Heart left ventricle (tissue), 16 donors: ENCODE measurements at regions of chr6 and their contacts with region 1.

Region 1: DNA sequence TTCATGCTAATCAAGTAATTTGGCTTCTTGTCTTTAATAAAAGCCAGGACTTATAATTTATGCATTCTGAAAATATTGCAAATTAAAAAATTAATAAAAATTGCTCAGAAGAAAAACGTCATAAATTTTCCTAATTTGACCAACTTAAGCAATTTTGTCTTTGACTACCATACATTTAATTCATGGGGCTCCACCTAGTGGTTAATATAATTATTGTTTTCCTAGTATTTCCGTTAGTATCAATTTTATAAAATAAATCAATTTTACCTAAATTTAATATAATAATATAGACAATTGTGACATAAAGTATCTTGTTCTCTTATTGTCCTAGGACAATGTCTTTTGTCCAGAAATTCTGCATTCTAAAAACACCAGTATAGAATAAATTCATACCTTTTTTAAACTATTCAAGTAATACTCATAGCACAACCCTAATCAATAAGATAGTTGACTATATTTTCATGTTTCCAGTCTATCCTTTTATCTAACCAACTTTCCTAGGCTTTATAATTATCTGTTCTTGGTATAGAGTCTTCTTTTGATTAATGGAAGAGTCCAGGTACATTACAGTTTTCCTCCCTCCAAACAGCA is 319.9 kb downstream of the TRDN start:
- DNase-seq: no peak
- ATAC-seq: no peak
- H3K4me3 ChIP-seq: no peak overlapping the region
- H3K27ac ChIP-seq: no peak overlapping the region
- H3K4me1 ChIP-seq: no peaks in the 10 kb centered on the region
- H3K27me3 ChIP-seq: no peaks in the 10 kb centered on the region
- CTCF ChIP-seq: peak; percentile 41 to 78 (median 62)
- POLR2A ChIP-seq: no peak

Region 2: GRCh38 chr6:122730775-122731386 is 585.9 kb before region 1 on chr6:
- intact Hi-C with region 1: loop called in 8 of 10 experiments (anchors 5 to 10 kb)
- DNase-seq: no peak
- ATAC-seq: no peak
- H3K4me3 ChIP-seq: no peak overlapping the region
- H3K27ac ChIP-seq: no peak overlapping the region
- H3K4me1 ChIP-seq: no peaks in the 10 kb centered on the region
- H3K27me3 ChIP-seq: peaks cover 0 to 18% (median 0%) of the 10 kb centered on the region in 9 donors
- CTCF ChIP-seq: peak; percentile 58 to 89 (median 75)
- POLR2A ChIP-seq: no peak

Region 3: DNA sequence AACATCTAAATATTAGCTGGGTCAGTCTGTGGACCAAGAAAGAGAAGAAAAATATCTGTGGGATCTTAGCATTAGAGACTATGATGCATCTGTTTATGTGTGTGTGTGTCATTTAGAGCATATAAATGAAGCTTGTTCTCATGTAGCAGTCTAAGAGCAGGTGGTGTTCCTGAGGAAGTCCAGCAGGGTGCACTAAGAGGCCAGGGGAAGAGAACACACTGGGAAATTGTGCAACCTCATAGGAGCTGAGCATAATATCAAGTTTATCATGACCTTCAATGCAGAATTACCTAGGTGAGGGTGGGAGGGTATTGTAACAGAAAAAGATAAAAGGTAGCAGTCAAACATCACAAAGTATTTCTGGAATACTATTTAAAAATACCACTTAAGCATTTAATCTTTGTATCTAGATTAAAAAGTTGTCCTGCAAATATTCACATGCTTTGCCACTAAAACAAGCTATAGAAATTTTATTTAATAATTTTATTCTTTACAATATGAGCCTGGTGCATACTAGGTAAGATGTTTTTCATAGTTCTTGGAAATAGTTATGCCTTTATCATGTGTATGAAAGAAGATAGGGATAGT is 447.3 kb before region 1 on chr6:
- intact Hi-C with region 1: loop called (anchors 2 to 10 kb)
- DNase-seq: peak in 1 of 5 donors; percentile 24
- ATAC-seq: peak; percentile 61 to 84 (median 80)
- H3K4me3 ChIP-seq: no peak overlapping the region
- H3K27ac ChIP-seq: no peak overlapping the region
- H3K4me1 ChIP-seq: no peaks in the 10 kb centered on the region
- H3K27me3 ChIP-seq: peaks cover 0 to 6% (median 0%) of the 10 kb centered on the region in 9 donors
- CTCF ChIP-seq: peak; percentile 30 to 63 (median 52)
- POLR2A ChIP-seq: no peak

Region 4: DNA sequence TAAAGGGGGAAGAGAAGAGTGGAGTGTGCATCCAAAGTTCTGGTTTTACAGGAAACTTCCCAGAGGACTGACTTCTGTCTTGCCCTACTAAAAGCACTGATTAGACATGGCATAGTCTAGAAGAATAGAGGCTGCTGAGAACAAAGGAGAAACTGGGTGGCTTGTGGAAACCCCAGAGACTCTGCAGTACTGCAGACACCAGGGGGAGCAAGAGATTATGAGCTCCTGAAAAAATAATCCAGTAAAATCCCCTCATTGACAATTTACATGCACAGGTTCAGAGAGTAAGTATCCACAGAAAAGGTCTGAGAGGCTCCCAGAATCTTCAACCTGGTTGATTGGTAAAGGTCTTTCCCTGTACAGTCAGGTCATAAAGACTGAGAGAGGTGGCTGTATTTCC is 369.5 kb before region 1 on chr6:
- intact Hi-C with region 1: loop called in 4 of 10 experiments (anchors 2 to 10 kb)
- DNase-seq: no peak
- ATAC-seq: no peak
- H3K4me3 ChIP-seq: no peak overlapping the region
- H3K27ac ChIP-seq: no peak overlapping the region
- H3K4me1 ChIP-seq: no peaks in the 10 kb centered on the region
- H3K27me3 ChIP-seq: no peaks in the 10 kb centered on the region
- CTCF ChIP-seq: peak in 6 of 12 donors; percentile 8 to 41 (median 29)
- POLR2A ChIP-seq: no peak

Region 5: GRCh38 chr6:122956376-122956775 is 360.5 kb before region 1 on chr6:
- intact Hi-C with region 1: loop called in 1 of 10 experiments (anchors 10 kb)
- DNase-seq: no peak
- ATAC-seq: no peak
- H3K4me3 ChIP-seq: no peak overlapping the region
- H3K27ac ChIP-seq: no peak overlapping the region
- H3K4me1 ChIP-seq: no peaks in the 10 kb centered on the region
- H3K27me3 ChIP-seq: no peaks in the 10 kb centered on the region
- CTCF ChIP-seq: no peak
- POLR2A ChIP-seq: no peak

Region 6: GRCh38 chr6:123598011-123598410 is 281.2 kb after region 1 on chr6:
- intact Hi-C with region 1: no loop called
- DNase-seq: no peak
- ATAC-seq: no peak
- H3K4me3 ChIP-seq: no peak overlapping the region
- H3K27ac ChIP-seq: no peak overlapping the region
- H3K4me1 ChIP-seq: peaks cover 0 to 18% (median 0%) of the 10 kb centered on the region in 12 donors
- H3K27me3 ChIP-seq: no peaks in the 10 kb centered on the region
- CTCF ChIP-seq: no peak
- POLR2A ChIP-seq: no peak

Region 7: DNA sequence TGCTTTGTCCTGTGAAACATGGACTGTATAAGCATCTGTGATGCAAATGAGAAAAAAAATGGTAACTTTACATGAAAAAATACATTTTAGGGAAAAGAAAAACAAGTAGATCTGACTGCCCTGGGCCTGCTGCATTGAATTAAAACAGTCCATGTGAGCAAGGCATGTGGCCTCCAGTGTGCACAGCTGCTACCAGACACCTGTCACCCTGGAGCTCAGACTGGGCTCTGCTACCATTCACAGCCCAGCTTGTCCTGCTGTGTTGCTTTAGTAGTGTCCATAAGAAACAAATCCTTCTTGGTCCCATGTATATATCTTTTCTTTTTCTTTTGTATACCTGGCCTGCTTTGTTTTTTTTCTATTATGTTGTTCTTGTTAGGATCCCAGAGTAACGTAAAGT is 802.8 kb after region 1 on chr6:
- intact Hi-C with region 1: no loop called
- DNase-seq: no peak
- ATAC-seq: no peak
- H3K4me3 ChIP-seq: no peak overlapping the region
- H3K27ac ChIP-seq: no peak overlapping the region
- H3K4me1 ChIP-seq: no peaks in the 10 kb centered on the region
- H3K27me3 ChIP-seq: no peaks in the 10 kb centered on the region
- CTCF ChIP-seq: no peak
- POLR2A ChIP-seq: no peak